Left ventricle myocardium inferior (tissue), 1 donor: ENCODE measurements at regions of chr17 and their contacts with region 1.

Region 1: DNA sequence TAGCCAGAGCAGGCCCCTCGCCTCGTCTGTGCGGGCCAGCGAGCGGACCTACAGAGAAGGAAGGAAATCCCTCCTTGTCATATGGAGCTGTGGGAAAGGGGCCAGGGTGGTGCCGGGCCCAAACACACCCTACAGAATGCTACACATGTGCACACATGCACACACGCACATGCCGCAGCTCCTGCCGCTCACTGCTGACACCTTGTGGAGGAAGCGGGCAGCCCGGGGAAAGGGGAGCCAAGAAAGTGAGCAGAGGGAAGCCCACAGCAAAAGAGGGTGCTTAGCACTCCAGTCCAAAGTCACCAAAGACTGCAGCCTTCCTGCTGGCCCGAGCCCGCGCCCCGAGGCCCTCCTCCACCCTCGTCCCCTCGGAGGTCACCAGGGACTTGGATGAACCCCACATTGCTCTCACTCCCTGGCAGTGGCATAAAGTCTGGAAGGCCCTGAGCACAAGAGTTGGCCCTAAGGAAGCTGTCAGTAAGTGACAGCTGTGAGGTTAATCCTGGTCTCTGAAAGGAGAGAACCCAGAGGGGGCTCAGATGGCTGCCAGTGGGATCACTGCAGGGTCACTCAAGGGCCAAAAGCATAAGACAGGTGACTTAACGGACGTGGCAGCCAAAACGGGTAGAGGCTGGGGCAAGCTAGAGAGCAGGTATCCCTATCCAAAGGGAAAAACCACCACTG is 68.2 kb downstream of the MYO18A start:
- DNase-seq: peak; percentile 66
- H3K4me3 ChIP-seq: no peak overlapping the region
- H3K27ac ChIP-seq: peak overlapping the region; percentile 79
- H3K4me1 ChIP-seq: peaks cover 74% of the 10 kb centered on the region
- H3K27me3 ChIP-seq: no peaks in the 10 kb centered on the region
- CTCF ChIP-seq: peak; percentile 93

Region 2: GRCh38 chr17:28967221-28968140 is 144.5 kb before region 1 on chr17:
- intact Hi-C with region 1: loop called (anchors 5 kb)
- DNase-seq: no peak
- H3K4me3 ChIP-seq: no peak overlapping the region
- H3K27ac ChIP-seq: no peak overlapping the region
- H3K4me1 ChIP-seq: peaks cover 52% of the 10 kb centered on the region
- H3K27me3 ChIP-seq: peaks cover 22% of the 10 kb centered on the region
- CTCF ChIP-seq: no peak

Region 3: GRCh38 chr17:29180034-29180787 is 68.3 kb after region 1 on chr17 and contains the start of gene MYO18A:
- intact Hi-C with region 1: no loop called
- DNase-seq: peak; percentile 80
- H3K4me3 ChIP-seq: peak within 1 kb of the TSS; percentile 81
- H3K27ac ChIP-seq: peak within 1 kb of the TSS; percentile 92
- H3K4me1 ChIP-seq: peaks cover 57% of the 10 kb centered on the region
- H3K27me3 ChIP-seq: no peaks in the 10 kb centered on the region
- CTCF ChIP-seq: peak; percentile 92
- total RNA-seq, gene MYO18A: 397 TPM